GM10248 (cell line): ENCODE measurements at regions of chr19 and their contacts with region 1.

Region 1: GRCh38 chr19:48872182-48872883 is at the start of gene PPP1R15A:
- DNase-seq: peak; percentile 97
- CTCF ChIP-seq: no peak

Region 2: GRCh38 chr19:48752498-48753365 is 119.6 kb before region 1 on chr19 and contains the start of gene FUT1:
- CTCF ChIA-PET with region 1: no interaction called
- POLR2A ChIA-PET with region 1: no interaction called
- DNase-seq: no peak
- CTCF ChIP-seq: no peak

Region 3: GRCh38 chr19:48899781-48900476 is 27.6 kb after region 1 on chr19 and contains the start of gene NUCB1:
- CTCF ChIA-PET with region 1: interaction called, 3 read pairs
- POLR2A ChIA-PET with region 1: interaction called, 14 read pairs
- DNase-seq: peak; percentile 99
- CTCF ChIP-seq: no peak

Region 4: DNA sequence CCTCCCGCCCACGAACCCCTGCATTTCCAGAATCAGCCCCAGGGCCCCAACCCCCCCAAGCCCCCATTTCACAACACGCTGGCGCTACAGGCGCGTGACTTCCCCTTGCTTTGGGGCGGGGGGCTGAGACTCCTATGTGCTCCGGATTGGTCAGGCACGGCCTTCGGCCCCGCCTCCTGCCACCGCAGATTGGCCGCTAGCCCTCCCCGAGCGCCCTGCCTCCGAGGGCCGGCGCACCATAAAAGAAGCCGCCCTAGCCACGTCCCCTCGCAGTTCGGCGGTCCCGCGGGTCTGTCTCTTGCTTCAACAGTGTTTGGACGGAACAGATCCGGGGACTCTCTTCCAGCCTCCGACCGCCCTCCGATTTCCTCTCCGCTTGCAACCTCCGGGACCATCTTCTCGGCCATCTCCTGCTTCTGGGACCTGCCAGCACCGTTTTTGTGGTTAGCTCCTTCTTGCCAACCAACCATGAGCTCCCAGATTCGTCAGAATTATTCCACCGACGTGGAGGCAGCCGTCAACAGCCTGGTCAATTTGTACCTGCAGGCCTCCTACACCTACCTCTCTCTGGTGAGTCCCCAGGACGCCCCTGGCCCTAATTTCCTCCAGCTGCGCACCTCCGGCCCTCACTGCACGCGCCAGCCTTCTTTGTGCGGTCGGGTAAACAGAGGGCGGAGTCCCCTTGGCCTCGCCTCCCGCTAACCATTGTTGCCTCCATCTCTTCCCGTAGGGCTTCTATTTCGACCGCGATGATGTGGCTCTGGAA is 92.9 kb after region 1 on chr19 and contains the start of gene FTL:
- CTCF ChIA-PET with region 1: interaction called, 17 read pairs
- POLR2A ChIA-PET with region 1: interaction called, 67 read pairs
- DNase-seq: peak; percentile 97
- CTCF ChIP-seq: no peak

Region 5: GRCh38 chr19:48975947-48976847 is 103.9 kb after region 1 on chr19:
- CTCF ChIA-PET with region 1: interaction called, 17 read pairs
- POLR2A ChIA-PET with region 1: interaction called, 10 read pairs
- DNase-seq: no peak
- CTCF ChIP-seq: no peak